ENCODE measurements at regions of chr5 and their contacts with region 1.

Region 1: DNA sequence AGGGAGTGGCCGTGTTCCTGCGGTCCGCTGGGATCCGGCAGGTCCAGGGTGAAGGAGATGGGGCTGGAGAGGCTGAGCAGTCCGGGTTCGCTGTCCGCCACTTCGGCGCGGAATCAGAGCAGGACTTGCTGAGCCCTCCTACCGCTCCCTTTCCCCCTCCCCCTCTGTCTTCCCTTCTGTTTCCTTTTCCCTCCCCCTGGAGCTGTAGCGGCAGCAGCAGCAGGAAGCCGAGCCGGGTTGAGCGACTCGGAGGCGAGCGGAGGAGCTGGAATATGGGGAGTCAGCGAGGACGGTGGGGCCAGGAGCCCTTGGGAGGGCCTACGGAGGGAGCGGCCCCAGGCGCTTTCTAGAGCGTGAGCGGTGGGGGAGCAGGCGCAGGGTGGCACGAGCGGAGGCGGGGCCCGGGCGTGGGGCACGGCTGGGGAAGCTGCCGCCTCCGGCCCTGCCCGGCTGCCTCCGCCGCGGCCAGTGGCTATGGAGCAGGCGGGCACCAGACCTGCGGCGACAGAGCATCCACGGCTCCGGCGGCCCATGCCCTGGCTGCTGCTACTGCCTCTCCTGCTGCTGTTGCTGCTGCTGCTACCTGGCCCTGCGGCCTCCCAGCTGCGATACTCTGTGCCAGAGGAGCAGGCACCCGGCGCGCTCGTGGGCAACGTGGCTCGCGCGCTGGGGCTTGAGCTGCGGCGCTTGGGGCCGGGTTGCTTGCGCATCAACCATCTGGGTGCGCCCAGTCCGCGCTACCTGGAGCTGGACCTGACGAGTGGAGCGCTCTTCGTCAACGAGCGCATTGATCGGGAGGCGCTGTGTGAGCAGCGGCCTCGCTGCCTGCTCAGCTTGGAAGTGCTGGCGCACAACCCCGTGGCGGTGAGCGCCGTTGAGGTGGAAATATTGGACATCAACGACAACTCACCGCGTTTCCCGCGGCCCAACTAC is at the start of gene PCDHAC2:
- DNase-seq: peak in 1 of 2 experiments; percentile 83
- H3K4me3 ChIP-seq: peak within 1 kb of the TSS; percentile 76 to 96 (median 92)
- H3K27ac ChIP-seq: no peak within 1 kb of the TSS
- H3K4me1 ChIP-seq: peaks cover 2 to 15% (median 7%) of the 10 kb centered on the region in 4 experiments; a peak in 5 of 7 replicates
- H3K27me3 ChIP-seq: peaks cover 2 to 27% (median 20%) of the 10 kb centered on the region in 4 experiments
- CTCF ChIP-seq: 0 out of 4 replicates have a peak, but pooled peaks of 1 of the 3 experiments have one; percentile 9
- EP300 ChIP-seq: peak in 1 of 2 experiments; percentile 44; a peak in 1 of 3 replicates
- POLR2A ChIP-seq: peak in 1 of 2 experiments; percentile 15; a peak in 1 of 3 replicates
- RAD21 ChIP-seq: 0 out of 4 replicates have a peak, but pooled peaks of 1 of the 2 experiments have one; percentile 3
- total RNA-seq, gene PCDHAC2: 3.7 and 4.9 TPM in 2 replicates

Region 2: DNA sequence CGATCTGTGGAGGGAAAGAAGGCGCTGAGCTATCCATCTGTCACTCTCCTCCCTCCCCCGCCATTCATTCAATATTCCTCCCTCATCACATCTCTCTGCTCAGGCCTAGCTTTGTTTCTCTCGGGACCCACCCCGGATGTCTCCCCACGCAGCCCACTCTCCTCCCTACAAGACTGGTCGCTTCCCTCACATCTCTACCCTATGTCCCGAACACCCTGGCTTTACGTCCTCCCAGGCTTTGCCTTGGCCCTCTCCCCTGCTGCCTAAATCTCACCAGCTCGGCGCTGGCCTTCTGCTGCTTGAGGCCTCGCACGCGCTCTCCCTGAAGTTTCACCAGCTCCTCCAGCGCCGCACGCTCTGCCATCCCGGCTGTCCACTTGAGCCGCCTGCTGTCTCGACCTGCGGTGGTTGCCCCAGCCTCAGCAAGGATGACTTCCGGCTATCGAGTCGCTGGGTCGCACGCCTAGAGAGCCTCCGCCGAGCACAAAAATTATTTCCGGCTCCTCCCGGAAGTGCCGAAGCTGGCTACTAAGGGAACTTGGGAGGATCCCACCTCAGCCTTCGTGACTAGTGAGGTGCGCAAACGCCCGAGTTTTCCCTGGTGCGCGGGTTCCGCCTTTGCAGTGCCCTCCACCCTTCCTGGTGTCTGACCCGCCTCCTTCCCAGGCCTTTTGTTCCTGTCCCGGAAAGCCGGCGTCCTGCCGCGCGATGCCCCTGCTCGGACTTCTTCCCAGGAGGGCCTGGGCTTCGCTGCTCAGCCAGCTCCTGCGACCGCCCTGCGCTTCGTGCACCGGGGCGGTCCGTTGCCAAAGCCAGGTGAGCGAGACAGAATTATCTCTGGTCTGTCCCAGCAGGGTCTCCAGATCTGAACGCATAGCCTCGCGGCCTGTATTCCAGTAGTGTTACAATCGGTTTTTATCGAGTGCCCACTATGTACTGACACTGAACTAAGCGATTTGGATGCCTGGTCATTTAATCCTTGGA is 275.3 kb before region 1 on chr5 and contains the starts of genes HARS1 and HARS2:
- CTCF ChIA-PET with region 1: no interaction called
- POLR2A ChIA-PET with region 1: no interaction called
- DNase-seq: peak; percentile 88 to 91
- H3K4me3 ChIP-seq: peak within 1 kb of the TSS; percentile 76 to 98 (median 88)
- H3K27ac ChIP-seq: 0 out of 2 replicates have a peak within 1 kb of the TSS, but pooled peaks have one; percentile 43
- H3K4me1 ChIP-seq: no peaks in the 10 kb centered on the region; a peak in 1 of 7 replicates
- H3K27me3 ChIP-seq: no peaks in the 10 kb centered on the region
- CTCF ChIP-seq: no peak
- EP300 ChIP-seq: no peak
- POLR2A ChIP-seq: peak; percentile 71 to 77
- RAD21 ChIP-seq: no peak
- total RNA-seq, gene HARS1: 55.6 and 56.8 TPM in 2 replicates
- total RNA-seq, gene HARS2: 21.4 and 23.1 TPM in 2 replicates

Region 3: DNA sequence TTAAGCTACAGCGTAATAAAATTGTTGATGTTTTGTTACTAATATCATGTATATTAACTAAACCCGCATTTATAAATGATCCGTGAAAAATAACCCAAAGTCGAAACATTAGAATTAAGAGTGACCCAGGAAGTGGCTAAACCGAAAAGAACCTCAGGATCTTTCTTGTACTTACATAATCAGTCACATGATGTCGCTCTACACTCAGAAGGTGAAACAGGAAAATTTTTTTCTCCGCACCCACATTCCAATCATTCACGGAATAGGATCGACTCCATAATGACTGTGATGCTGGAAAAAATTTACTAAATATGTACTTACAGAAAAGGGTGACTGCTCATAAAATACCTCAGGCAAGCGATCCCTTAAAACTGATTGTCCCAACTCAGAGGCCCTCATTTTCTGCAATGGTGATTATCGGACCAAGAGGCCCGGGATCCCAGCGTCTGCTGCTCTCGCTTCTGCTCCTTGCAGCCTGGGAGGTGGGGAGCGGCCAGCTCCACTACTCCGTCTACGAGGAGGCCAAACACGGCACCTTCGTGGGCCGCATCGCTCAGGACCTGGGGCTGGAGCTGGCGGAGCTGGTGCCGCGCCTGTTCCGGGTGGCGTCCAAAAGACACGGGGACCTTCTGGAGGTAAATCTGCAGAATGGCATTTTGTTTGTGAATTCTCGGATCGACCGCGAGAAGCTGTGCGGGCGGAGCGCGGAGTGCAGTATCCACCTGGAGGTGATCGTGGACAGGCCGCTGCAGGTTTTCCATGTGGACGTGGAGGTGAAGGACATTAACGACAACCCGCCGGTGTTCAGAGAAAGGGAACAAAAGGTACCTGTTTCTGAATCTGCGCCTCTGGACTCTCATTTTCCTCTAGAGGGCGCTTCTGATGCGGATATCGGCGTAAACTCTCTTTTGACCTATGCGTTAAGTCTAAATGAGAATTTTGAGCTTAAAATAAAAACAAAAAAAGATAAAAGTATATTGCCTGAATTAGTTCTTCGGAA is 91.2 kb before region 1 on chr5 and contains the start of gene PCDHA12:
- CTCF ChIA-PET with region 1: interaction called, 13 read pairs
- POLR2A ChIA-PET with region 1: interaction called, 7 read pairs
- DNase-seq: no peak
- H3K4me3 ChIP-seq: peak within 1 kb of the TSS; percentile 55 to 67 (median 65)
- H3K27ac ChIP-seq: no peak within 1 kb of the TSS
- H3K4me1 ChIP-seq: no peaks in the 10 kb centered on the region; a peak in 2 of 7 replicates
- H3K27me3 ChIP-seq: no peaks in the 10 kb centered on the region
- CTCF ChIP-seq: peak in 2 of 3 experiments; percentile 64 to 69; a peak in 3 of 4 replicates
- EP300 ChIP-seq: no peak
- POLR2A ChIP-seq: peak in 1 of 2 experiments; percentile 68; a peak in 2 of 3 replicates
- RAD21 ChIP-seq: peak; percentile 69 to 73
- total RNA-seq, gene PCDHA12: 9.3 and 10.6 TPM in 2 replicates

Region 4: GRCh38 chr5:140882591-140882899 is 84.0 kb before region 1 on chr5:
- CTCF ChIA-PET with region 1: interaction called, 10 read pairs
- POLR2A ChIA-PET with region 1: no interaction called
- DNase-seq: peak in 1 of 2 experiments; percentile 73
- H3K4me3 ChIP-seq: peak overlapping the region; percentile 11 to 60 (median 58); a peak in 6 of 8 replicates
- H3K27ac ChIP-seq: no peak overlapping the region
- H3K4me1 ChIP-seq: no peaks in the 10 kb centered on the region
- H3K27me3 ChIP-seq: no peaks in the 10 kb centered on the region
- CTCF ChIP-seq: peak in 2 of 3 experiments; percentile 70 to 80; a peak in 3 of 4 replicates
- EP300 ChIP-seq: no peak
- POLR2A ChIP-seq: no peak
- RAD21 ChIP-seq: peak; percentile 84 to 89

Region 5: GRCh38 chr5:140977003-140977402 is 10.4 kb after region 1 on chr5:
- CTCF ChIA-PET with region 1: interaction called, 18 read pairs
- POLR2A ChIA-PET with region 1: interaction called, 22 read pairs
- DNase-seq: no peak
- H3K4me3 ChIP-seq: no peak overlapping the region
- H3K27ac ChIP-seq: no peak overlapping the region
- H3K4me1 ChIP-seq: peaks cover 0 to 8% (median 2%) of the 10 kb centered on the region in 4 experiments; a peak in 6 of 7 replicates
- H3K27me3 ChIP-seq: no peaks in the 10 kb centered on the region
- CTCF ChIP-seq: no peak
- EP300 ChIP-seq: no peak
- POLR2A ChIP-seq: no peak
- RAD21 ChIP-seq: no peak

Region 6: DNA sequence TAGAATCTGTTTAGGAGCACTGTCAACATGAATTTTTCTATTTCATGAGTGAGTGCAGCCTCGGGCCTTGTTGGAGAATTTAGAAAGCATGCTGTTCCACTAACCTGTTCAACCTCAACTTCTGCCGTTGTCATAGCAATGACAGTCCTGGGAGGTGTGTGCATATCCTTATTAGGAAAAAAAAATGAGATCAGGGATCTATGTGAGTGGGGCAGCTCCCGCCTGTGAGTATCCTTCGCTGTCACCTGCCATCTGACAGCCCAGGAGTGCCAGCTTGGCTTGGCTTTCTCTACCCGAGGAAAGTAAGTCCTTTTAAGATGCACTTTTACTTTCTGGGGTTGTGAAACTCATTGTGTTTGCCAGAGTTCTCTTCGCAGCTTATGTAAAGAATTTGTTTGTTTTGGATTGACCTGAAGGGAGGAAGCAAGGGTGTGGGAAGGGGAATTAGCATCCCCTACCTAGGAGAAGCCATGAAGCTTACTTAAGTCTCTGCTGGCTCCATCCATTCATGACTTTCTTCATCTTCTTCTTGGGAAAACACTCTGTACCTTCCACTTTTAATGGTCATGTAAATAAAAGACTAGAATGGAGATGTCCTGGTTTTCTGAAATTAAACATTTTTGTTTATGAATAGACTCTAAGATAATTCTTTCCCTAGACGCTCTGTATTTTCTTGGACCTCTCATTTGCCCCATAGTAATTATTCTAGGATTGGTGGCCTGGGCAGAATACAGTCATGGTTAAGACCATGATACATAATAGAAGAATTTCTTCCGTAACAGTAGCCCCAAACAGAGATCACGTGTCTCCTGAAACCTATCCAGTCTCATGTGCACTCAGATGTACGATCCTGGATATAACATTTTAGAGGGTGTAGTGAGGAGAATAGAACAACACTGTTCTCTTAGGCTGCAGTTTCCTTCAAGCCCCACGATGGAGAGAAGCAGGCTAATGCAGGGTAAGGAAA is 21.8 kb after region 1 on chr5:
- CTCF ChIA-PET with region 1: interaction called, 15 read pairs
- POLR2A ChIA-PET with region 1: interaction called, 43 read pairs
- DNase-seq: no peak
- H3K4me3 ChIP-seq: peak overlapping the region in 1 of 4 experiments; percentile 2; a peak in 2 of 8 replicates
- H3K27ac ChIP-seq: no peak overlapping the region
- H3K4me1 ChIP-seq: peaks cover 6 to 28% (median 13%) of the 10 kb centered on the region in 4 experiments; a peak in 6 of 7 replicates
- H3K27me3 ChIP-seq: no peaks in the 10 kb centered on the region
- CTCF ChIP-seq: no peak
- EP300 ChIP-seq: no peak
- POLR2A ChIP-seq: no peak
- RAD21 ChIP-seq: no peak

Region 7: GRCh38 chr5:141001854-141002604 is 35.5 kb after region 1 on chr5:
- CTCF ChIA-PET with region 1: interaction called, 13 read pairs
- POLR2A ChIA-PET with region 1: interaction called, 123 read pairs
- DNase-seq: peak; percentile 85 to 88
- H3K4me3 ChIP-seq: peak overlapping the region; percentile 35 to 65 (median 57); a peak in 7 of 8 replicates
- H3K27ac ChIP-seq: peak overlapping the region; percentile 88
- H3K4me1 ChIP-seq: peaks cover 8 to 39% (median 31%) of the 10 kb centered on the region in 4 experiments; a peak in 6 of 7 replicates
- H3K27me3 ChIP-seq: no peaks in the 10 kb centered on the region
- CTCF ChIP-seq: no peak
- EP300 ChIP-seq: peak in 1 of 2 experiments; percentile 96; a peak in 1 of 3 replicates
- POLR2A ChIP-seq: peak in 1 of 2 experiments; percentile 87; a peak in 2 of 3 replicates
- RAD21 ChIP-seq: peak in 1 of 2 experiments; percentile 12; a peak in 1 of 4 replicates

Region 8: GRCh38 chr5:141010047-141010791 is 43.7 kb after region 1 on chr5:
- CTCF ChIA-PET with region 1: interaction called, 10 read pairs
- POLR2A ChIA-PET with region 1: interaction called, 123 read pairs
- DNase-seq: no peak
- H3K4me3 ChIP-seq: no peak overlapping the region
- H3K27ac ChIP-seq: no peak overlapping the region
- H3K4me1 ChIP-seq: peaks cover 0 to under 1% (median under 1%) of the 10 kb centered on the region in 4 experiments; a peak in 5 of 7 replicates
- H3K27me3 ChIP-seq: no peaks in the 10 kb centered on the region
- CTCF ChIP-seq: no peak
- EP300 ChIP-seq: no peak
- POLR2A ChIP-seq: no peak
- RAD21 ChIP-seq: no peak